Ascending aorta (tissue), 2 donors: ENCODE measurements at regions of chr4 and their contacts with region 1.

Region 1: GRCh38 chr4:6269616-6270511 is at the start of gene WFS1:
- DNase-seq: peak; percentile 92 to 99
- H3K4me3 ChIP-seq: peak within 1 kb of the TSS; percentile 82 to 95
- H3K27ac ChIP-seq: peak within 1 kb of the TSS; percentile 87
- H3K4me1 ChIP-seq: peaks cover 25 to 38% of the 10 kb centered on the region in 2 donors
- H3K27me3 ChIP-seq: no peaks in the 10 kb centered on the region
- CTCF ChIP-seq: no peak
- total RNA-seq, gene WFS1: 166 TPM

Region 2: DNA sequence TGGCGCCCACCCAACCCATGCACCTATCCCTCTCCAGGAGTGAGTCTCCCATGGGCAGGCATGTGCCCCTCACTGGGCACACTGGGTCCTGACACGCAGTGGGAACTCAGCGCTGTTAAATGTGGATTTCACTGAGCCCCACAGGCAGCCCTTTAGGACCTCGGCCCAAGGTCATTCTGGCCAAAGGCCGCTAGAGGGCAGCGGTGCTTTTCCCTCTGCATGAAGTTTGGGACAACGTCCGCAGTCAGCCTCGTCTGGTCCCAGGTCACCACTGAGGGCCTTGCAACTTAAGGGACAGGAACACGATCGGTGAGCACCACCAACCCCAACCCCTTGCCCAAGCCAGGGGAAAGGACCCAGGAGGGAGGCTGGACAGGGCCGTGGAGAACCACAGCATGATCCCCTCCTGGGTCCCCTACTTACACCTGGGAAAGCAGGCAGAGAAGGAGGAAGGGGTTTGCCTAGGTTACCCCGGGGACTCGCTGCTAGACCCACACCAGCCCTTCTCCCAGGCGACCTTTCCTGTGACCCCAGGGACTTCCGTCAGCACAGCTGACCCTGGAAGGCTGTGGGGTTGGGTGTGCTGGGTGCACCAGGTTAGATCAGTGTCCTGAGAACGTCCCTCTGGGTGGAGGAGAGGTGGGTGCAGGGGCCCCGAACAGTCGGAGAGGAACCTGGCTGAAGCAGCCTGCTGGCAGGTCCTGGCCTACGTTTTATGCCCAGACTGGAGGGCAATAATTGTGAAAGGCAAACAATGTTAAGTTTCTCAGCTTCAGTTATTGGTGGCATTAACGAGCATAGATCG is 1274.6 kb before region 1 on chr4:
- intact Hi-C with region 1: loop called (anchors 10 kb)
- DNase-seq: peak in 1 of 2 donors; percentile 85
- H3K4me3 ChIP-seq: no peak overlapping the region
- H3K27ac ChIP-seq: no peak overlapping the region
- H3K4me1 ChIP-seq: peaks cover 3 to 7% of the 10 kb centered on the region in 2 donors
- H3K27me3 ChIP-seq: no peaks in the 10 kb centered on the region
- CTCF ChIP-seq: peak; percentile 62 to 88 (median 84)

Region 3: DNA sequence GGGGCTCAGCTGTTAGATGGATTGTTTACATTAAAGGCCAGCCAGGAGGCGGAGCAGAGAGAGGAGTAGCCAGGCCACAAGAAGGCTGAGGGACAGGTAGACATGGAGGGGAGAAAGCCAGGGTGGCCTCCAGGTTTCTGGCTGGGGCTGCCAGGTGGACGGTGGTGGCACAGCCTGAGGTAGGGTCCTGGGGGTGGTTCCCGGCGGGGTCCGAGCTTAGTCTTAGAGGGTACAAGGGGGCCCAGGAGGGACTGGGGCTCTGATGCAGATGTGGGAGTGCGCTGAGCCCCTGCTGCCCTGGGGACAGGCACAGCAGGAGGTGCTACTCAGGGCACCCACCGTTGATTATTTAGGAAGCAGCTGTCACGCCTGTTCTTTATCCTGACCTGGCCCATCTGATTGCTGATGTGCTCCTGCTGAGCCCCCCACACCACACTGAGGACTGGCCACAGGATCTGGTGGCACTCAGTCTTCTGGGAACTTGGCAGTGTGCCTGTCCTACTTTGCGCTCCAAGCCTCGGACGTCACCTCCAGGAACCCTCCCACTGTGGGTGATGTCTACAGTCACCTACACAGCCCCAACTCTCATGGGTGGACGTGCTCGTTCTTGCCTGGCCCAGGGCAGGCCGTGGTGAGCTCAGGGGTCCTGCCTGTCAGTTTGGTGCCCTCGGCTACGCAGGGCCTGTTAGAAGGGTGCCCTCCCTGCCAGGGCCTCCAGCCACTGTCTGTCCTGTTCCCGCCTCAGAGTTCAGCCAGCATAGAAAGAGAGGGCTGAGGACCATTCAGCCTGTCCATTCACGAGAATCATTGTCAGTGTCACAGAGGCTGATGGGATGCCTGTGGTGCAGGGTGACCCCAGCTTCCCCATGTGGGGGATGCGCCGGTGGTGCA is 11.8 kb after region 1 on chr4:
- intact Hi-C with region 1: loop called (anchors 1 kb)
- DNase-seq: peak in 1 of 2 donors; percentile 80
- H3K4me3 ChIP-seq: no peak overlapping the region
- H3K27ac ChIP-seq: peak overlapping the region; percentile 54 to 58
- H3K4me1 ChIP-seq: peaks cover 9 to 42% of the 10 kb centered on the region in 2 donors
- H3K27me3 ChIP-seq: no peaks in the 10 kb centered on the region
- CTCF ChIP-seq: no peak

Region 4: DNA sequence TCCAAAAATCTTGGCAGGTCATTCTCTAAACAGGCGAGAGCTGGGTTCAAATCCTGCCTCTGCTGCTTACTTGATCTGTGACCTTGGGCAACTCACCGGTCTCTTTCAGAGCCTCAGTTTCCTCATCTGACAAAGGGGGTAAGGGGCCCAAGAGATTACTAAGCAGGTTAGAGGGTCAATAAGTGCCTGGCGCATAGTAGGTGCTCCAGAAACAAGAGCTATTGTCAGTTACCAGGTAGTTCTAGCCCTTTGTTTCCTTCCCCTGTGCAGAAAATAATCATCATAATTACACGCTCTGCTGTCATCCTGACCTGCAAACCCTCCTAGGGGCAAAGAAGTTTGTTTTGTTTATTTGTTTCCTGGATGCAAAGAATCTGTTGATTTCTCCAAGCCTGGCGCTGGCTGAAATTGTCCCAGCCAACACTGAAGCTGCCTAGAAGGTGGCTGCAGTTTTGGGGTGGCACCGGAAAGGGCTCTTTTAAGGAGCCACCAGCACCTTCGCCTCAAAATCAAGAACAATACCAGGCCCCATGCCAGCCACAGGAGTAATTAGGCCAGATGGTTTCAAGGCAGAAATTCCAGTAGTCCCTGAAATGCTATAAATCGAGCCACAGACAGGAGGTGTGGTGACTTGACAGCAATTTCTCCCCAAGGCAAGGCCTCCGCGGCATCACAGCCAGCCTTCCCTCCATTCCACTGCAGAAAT is 502.5 kb after region 1 on chr4:
- intact Hi-C with region 1: loop called (anchors 5 kb)
- DNase-seq: no peak
- H3K4me3 ChIP-seq: no peak overlapping the region
- H3K27ac ChIP-seq: peak overlapping the region; percentile 72 to 90
- H3K4me1 ChIP-seq: peaks cover 9 to 41% of the 10 kb centered on the region in 2 donors
- H3K27me3 ChIP-seq: no peaks in the 10 kb centered on the region
- CTCF ChIP-seq: no peak

Region 5: DNA sequence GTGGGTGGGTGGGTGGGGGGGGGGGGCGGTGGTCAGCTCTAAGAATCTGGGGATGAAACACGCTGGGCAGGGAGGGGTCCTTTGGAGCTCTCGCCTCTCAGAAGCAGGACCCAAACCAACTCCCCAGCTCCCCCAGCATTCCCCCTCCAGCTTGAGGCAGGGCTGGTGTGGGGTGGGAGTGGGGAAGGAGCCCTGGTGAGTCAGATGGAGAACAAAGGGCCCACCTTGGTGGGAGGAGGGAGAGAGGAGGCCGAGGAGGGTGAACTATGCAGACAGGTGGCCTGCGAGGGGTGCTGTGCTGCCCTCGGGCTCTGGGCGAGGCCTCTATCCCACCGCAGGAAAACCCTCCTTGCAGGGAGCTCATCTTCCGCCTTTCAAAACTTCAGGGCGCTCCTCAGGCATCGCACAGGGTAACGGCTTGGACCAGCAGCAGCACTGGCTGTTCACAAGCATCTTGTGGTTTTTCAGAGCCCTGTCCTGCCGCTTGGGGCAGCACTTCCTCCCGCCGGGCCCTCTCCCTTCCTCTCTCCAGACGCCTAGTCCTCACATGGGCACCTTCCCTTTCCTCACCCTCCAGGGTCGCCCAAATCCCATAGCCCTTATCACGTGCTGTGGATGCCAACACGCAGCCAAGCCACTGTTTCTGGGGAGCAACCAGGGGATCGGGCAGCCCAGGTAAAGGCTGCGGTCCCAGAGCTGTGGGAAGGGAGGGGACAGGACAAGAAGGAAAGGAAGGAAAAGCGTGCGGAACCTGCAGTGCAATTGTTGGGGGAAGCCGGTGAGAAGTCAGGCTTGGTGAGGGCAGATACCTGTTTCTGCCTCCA is 832.0 kb after region 1 on chr4:
- intact Hi-C with region 1: loop called (anchors 2 kb)
- DNase-seq: peak in 1 of 2 donors; percentile 83
- H3K4me3 ChIP-seq: peak overlapping the region; percentile 57 to 70
- H3K27ac ChIP-seq: peak overlapping the region; percentile 83 to 84
- H3K4me1 ChIP-seq: peaks cover 5 to 20% of the 10 kb centered on the region in 2 donors
- H3K27me3 ChIP-seq: no peaks in the 10 kb centered on the region
- CTCF ChIP-seq: peak; percentile 41 to 72 (median 69)